HepG2 (cell line): ENCODE measurements at regions of chr17 and their contacts with region 1.

Region 1: DNA sequence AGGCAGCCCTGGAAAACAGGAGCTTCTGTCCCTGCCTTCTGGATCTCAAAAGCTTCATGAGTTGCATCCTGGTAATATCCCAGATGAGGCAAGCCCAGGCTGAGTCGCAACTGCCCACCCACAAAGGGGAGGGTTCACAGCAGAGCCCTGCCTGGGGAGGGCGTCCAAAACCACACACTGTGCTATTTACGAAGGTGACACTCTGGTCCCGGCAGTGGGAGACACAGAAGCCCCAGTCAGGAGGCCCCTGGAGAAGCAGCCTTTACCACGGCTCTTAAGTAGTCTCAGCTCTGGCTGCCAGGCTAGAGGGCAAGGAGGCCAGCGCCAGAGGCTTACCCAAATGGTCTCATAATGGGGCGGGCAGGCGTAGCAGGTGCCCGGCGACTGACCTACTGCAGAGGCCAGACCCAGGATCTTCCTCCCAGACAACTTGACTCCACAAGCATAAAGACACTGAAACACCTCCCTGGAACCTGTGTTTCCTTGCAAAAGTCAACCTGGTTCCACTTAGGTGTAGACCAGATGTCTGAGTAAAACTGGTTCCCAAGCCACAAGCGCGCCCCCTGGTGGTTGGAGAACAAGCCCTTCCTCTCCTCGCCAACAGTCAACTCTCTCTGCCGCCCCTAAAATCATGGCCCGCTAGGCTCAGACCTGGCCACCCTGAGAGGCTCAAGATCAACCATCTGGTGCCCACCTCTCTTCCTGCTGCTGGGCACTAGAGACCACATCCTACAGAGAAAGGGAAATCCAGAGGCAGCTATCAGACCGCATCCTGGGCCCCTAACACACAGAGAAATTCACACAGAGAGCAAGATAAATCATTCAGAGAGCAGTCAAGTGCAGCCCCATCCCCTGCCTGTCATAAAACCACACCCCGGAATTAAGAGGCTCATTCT is 5.2 kb downstream of the AXIN2 start:
- DNase-seq: peak; percentile 82
- ATAC-seq: peak; percentile 41
- H3K4me3 ChIP-seq: no peak overlapping the region
- H3K27ac ChIP-seq: peak overlapping the region; percentile 96
- H3K4me1 ChIP-seq: no peaks in the 10 kb centered on the region
- H3K27me3 ChIP-seq: no peaks in the 10 kb centered on the region; a peak in 1 of 5 replicates
- CTCF ChIP-seq: peak; percentile 94
- EP300 ChIP-seq: no peak
- POLR2A ChIP-seq: 0 out of 4 replicates have a peak, but pooled peaks of 1 of the 2 experiments have one; percentile 33
- RAD21 ChIP-seq: peak; percentile 74

Region 2: DNA sequence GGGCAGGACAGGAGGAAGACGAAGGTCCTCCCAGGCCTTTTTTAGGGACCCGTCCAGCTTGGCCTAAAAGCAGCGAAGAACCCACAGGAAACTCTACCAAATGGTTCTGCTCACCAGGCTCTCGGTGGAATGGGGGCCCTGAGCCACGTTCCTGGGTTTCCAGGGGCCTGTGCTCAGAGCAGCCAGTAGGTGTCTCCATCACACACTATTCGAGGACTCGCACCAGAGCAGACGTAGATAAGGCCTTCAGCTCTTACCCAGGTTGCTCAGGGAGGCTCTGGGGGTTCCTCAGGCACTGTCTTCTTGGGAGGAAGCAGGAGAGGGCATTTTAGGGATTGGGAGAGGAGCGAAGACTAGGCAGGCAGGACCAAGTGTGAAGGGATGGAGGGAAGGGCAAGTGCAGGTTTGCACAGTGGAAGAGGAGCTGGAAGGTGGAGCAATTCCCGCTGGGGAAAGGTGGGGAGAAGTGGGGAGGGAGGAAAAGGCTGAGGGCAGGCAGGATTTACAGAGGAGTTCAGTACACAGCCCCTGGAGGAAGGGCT is 262.0 kb before region 1 on chr17:
- CTCF ChIA-PET with region 1: interaction called, 3 read pairs
- POLR2A ChIA-PET with region 1: no interaction called
- in situ Hi-C with region 1: no loop called
- intact Hi-C with region 1: loop called (anchors 1 kb)
- DNase-seq: peak; percentile 68
- ATAC-seq: peak; percentile 99
- H3K4me3 ChIP-seq: no peak overlapping the region; a peak in 1 of 6 replicates
- H3K27ac ChIP-seq: no peak overlapping the region
- H3K4me1 ChIP-seq: peaks cover 9% of the 10 kb centered on the region; the same call in 1 of the 2 replicates
- H3K27me3 ChIP-seq: peaks cover 0 to 18% of the 10 kb centered on the region in 2 experiments; a peak in 3 of 5 replicates
- CTCF ChIP-seq: peak; percentile 99
- EP300 ChIP-seq: no peak
- POLR2A ChIP-seq: no peak
- RAD21 ChIP-seq: peak; percentile 88

Region 3: DNA sequence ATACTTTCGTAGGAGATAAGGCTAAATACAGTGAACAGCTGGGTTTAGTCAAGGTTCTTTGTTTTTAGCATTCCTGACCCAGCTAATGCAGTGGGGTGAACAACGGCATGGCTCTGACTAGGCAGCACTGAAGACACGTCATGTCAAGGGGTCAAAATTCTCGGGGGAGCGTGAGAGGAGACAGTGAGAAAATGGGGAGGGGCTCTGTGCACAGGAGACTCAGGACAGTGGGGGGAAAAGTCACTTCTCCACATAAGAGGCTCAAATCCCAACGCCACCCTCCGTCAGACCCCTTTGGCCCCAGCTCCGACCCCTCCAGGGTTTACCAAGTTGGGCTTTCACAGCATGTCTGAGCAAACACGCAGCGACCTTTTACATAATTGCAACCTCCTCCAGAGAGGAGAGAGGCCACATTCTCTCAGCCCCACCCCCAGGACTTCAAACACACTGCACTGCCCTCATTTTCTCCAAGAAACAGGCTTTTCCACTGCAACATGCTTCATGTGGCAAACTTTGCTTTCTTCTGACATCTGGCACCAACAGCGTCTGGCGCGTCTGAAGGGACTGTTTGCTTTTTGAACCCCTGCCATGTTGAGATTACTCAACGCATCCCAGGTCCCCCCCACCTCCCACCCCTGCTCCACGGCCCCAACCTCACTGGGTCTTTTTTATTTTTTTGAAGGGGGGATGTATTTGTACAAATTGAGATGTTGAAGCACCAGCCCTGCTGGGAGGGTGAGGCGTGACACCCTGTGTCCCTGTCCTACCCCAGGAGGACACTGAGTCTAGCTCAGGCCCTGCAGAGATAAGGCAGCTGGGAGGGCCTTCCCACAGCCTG is 24.8 kb before region 1 on chr17:
- CTCF ChIA-PET with region 1: interaction called, 3 read pairs
- POLR2A ChIA-PET with region 1: interaction called, 15 read pairs
- in situ Hi-C with region 1: no loop called
- intact Hi-C with region 1: no loop called
- DNase-seq: no peak
- ATAC-seq: peak; percentile 24
- H3K4me3 ChIP-seq: no peak overlapping the region
- H3K27ac ChIP-seq: no peak overlapping the region
- H3K4me1 ChIP-seq: peaks cover 67% of the 10 kb centered on the region
- H3K27me3 ChIP-seq: no peaks in the 10 kb centered on the region
- CTCF ChIP-seq: no peak
- EP300 ChIP-seq: no peak
- POLR2A ChIP-seq: peak in 1 of 2 experiments; percentile 23; a peak in 1 of 4 replicates
- RAD21 ChIP-seq: no peak

Region 4: DNA sequence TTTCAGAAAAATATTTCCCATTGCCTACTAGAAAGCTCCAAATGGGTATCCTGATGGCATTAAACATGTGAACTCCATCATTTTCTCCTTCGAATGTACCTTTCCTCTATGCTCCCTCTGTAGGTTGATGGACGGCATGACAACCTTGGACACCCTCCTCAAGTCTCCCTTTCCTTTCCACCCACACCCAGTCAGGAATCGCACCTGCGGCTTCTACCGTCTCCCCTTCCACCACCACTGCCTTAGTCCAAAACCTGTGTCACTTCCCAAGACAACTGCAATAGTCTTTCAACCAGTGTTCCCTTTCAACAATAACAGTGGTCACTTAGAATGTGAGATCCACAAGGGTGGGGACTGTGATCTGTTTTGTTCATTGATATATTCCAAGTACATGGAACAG is 238.3 kb after region 1 on chr17:
- CTCF ChIA-PET with region 1: interaction called, 7 read pairs
- POLR2A ChIA-PET with region 1: interaction called, 3 read pairs
- in situ Hi-C with region 1: loop called (anchors 5 kb)
- intact Hi-C with region 1: loop called (anchors 5 kb)
- DNase-seq: peak; percentile 63
- ATAC-seq: peak; percentile 84
- H3K4me3 ChIP-seq: no peak overlapping the region
- H3K27ac ChIP-seq: no peak overlapping the region
- H3K4me1 ChIP-seq: 0 out of 2 replicates have a peak, but pooled peaks cover 5% of the 10 kb centered on the region
- H3K27me3 ChIP-seq: no peaks in the 10 kb centered on the region
- CTCF ChIP-seq: peak; percentile 79
- EP300 ChIP-seq: no peak
- POLR2A ChIP-seq: no peak
- RAD21 ChIP-seq: peak; percentile 54; the same call in 1 of the 2 replicates

Region 5: GRCh38 chr17:65988081-65988850 is 432.0 kb after region 1 on chr17:
- CTCF ChIA-PET with region 1: interaction called, 6 read pairs
- POLR2A ChIA-PET with region 1: no interaction called
- in situ Hi-C with region 1: loop called (anchors 5 kb)
- intact Hi-C with region 1: loop called (anchors 1 kb)
- DNase-seq: peak; percentile 76
- ATAC-seq: peak; percentile 83
- H3K4me3 ChIP-seq: no peak overlapping the region
- H3K27ac ChIP-seq: no peak overlapping the region
- H3K4me1 ChIP-seq: no peaks in the 10 kb centered on the region
- H3K27me3 ChIP-seq: no peaks in the 10 kb centered on the region
- CTCF ChIP-seq: peak; percentile 87
- EP300 ChIP-seq: no peak
- POLR2A ChIP-seq: no peak
- RAD21 ChIP-seq: peak; percentile 81